Endothelial cell of umbilical vein (primary cell): ENCODE measurements at regions of chr4 and their contacts with region 1.

Region 1: DNA sequence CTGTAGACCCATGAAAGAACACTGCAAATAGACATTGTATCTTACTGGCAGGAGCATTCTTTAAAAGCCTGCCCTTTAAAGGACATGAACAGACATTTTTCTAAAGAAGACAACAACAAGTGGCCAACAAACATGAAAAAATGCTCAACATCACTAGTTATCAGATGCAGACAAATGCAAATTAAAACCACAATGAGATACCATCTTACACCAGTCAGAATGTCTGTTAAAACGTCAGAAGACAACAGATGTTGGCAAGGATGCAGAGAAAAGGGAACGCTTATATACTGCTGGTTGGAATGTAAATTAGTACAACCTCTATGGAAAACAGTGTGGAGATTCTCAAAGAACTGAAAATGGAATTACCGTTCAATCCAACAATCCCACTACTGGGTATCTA is 77.2 kb downstream of the ATP10D start:
- DNase-seq: no peak
- H3K4me3 ChIP-seq: no peak overlapping the region
- H3K27ac ChIP-seq: no peak overlapping the region
- H3K4me1 ChIP-seq: peaks cover 2% of the 10 kb centered on the region
- H3K27me3 ChIP-seq: no peaks in the 10 kb centered on the region
- CTCF ChIP-seq: no peak
- POLR2A ChIP-seq: no peak

Region 2: GRCh38 chr4:47355568-47355967 is 206.7 kb before region 1 on chr4:
- CTCF ChIA-PET with region 1: no interaction called
- POLR2A ChIA-PET with region 1: no interaction called
- dilution Hi-C with region 1: no loop called
- intact Hi-C with region 1: no loop called
- DNase-seq: no peak
- H3K4me3 ChIP-seq: no peak overlapping the region
- H3K27ac ChIP-seq: no peak overlapping the region
- H3K4me1 ChIP-seq: no peaks in the 10 kb centered on the region
- H3K27me3 ChIP-seq: no peaks in the 10 kb centered on the region
- CTCF ChIP-seq: no peak
- POLR2A ChIP-seq: no peak

Region 3: GRCh38 chr4:47485047-47485692 is 77.1 kb before region 1 on chr4 and contains the start of gene ATP10D:
- CTCF ChIA-PET with region 1: interaction called, 16 read pairs
- POLR2A ChIA-PET with region 1: no interaction called
- dilution Hi-C with region 1: no loop called
- intact Hi-C with region 1: loop called (anchors 1 kb)
- DNase-seq: peak; percentile 95
- H3K4me3 ChIP-seq: peak within 1 kb of the TSS; percentile 75 to 83 (median 79)
- H3K27ac ChIP-seq: peak within 1 kb of the TSS; percentile 77
- H3K4me1 ChIP-seq: peaks cover 2% of the 10 kb centered on the region
- H3K27me3 ChIP-seq: no peaks in the 10 kb centered on the region
- CTCF ChIP-seq: no peak
- POLR2A ChIP-seq: peak; percentile 94
- total RNA-seq, gene ATP10D: 30.9 and 34.1 TPM in 2 replicates

Region 4: DNA sequence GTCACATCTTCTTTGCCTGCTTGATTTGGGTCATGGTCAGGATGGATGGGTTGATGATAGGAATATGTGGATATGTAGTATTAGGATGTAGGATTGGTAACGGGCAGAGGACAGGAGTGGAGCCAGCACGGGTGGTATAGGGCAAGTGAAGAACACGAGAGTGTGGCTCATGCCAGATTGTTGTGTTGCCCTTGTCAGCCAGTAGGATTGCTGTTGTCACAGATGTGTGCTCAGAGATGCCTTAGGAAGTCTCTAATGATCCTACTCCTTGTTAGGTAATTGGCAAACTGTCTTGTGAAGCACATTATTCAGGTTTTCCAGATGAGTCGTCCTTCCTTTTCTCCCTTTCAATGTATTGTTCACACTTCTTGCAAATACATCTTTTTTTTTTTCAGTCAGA is 71.7 kb before region 1 on chr4:
- CTCF ChIA-PET with region 1: interaction called, 16 read pairs
- POLR2A ChIA-PET with region 1: no interaction called
- dilution Hi-C with region 1: no loop called
- intact Hi-C with region 1: loop called (anchors 1 kb)
- DNase-seq: peak; percentile 80
- H3K4me3 ChIP-seq: no peak overlapping the region
- H3K27ac ChIP-seq: no peak overlapping the region
- H3K4me1 ChIP-seq: peaks cover 8% of the 10 kb centered on the region
- H3K27me3 ChIP-seq: no peaks in the 10 kb centered on the region
- CTCF ChIP-seq: peak; percentile 57 to 64
- POLR2A ChIP-seq: no peak

Region 5: DNA sequence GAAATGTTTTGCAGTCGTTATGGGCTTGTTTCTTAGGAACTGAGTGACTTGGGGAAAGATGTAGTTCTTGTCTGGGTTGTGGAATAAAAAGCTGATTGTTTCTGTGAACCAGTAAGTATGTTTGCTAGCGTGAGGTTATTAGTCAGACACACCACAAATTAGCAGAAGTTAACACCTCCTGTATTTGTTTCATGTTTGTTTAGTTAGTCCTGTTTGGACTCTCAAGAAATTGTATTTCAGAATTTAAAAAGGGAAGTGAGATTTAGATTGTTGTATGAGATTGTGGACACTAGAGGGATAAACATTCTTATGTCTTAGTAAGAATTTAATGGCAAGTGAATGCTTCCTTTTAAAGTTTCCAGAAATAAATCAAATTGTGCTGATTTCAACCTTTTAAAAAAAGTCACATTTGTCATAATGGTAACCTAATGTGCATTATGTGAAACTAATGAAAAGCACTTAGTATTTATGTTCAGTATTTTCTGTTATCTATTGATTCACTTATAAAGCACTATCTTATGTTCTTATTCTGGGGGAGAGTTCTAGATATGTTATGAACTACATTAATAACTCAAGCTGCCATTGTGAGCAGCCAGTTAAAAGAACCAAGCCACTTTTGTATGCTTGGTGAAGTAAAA is 51.7 kb before region 1 on chr4:
- CTCF ChIA-PET with region 1: interaction called, 22 read pairs
- POLR2A ChIA-PET with region 1: no interaction called
- dilution Hi-C with region 1: no loop called
- intact Hi-C with region 1: loop called (anchors 1 kb)
- DNase-seq: peak; percentile 68
- H3K4me3 ChIP-seq: no peak overlapping the region
- H3K27ac ChIP-seq: peak overlapping the region; percentile 45
- H3K4me1 ChIP-seq: peaks cover 11% of the 10 kb centered on the region
- H3K27me3 ChIP-seq: no peaks in the 10 kb centered on the region
- CTCF ChIP-seq: no peak
- POLR2A ChIP-seq: no peak

Region 6: DNA sequence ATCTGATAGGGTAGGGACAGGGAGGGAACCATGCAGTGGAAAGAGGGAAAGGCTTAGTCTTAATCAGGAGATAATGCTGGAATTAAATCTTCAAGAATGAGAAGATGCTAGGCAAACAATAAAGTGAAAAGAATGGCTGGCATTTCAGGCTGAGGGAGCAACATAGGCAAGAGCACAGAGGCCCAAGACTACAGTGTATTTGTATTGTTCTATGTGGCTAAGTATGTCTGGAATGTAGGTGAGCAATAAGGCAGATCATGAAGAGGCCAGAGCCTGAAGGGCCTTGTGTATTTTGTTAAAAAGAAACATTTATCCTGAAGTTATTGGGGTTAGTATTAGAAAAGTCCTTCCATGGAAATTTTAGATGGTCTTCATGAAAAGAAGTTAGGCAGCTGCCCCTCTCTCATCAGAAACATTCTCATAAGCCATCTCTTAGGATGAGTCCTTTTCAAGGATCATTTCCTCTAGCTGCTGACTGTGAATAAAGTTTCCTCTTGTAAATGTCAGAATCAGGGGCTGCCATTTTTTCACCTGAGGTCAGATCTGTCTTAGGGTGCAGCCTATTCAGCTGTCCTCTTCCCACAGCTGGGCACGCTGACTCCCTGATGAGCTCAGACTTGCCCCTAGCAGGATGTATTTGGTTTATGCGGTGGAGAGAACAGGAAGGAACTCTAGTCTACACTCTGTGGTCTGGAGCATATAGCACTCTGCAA is 30.9 kb before region 1 on chr4:
- CTCF ChIA-PET with region 1: interaction called, 4 read pairs
- POLR2A ChIA-PET with region 1: no interaction called
- dilution Hi-C with region 1: no loop called
- intact Hi-C with region 1: loop called (anchors 1 kb)
- DNase-seq: peak; percentile 81
- H3K4me3 ChIP-seq: no peak overlapping the region
- H3K27ac ChIP-seq: peak overlapping the region; percentile 81
- H3K4me1 ChIP-seq: peaks cover 43% of the 10 kb centered on the region
- H3K27me3 ChIP-seq: no peaks in the 10 kb centered on the region
- CTCF ChIP-seq: no peak
- POLR2A ChIP-seq: peak; percentile 41

Region 7: DNA sequence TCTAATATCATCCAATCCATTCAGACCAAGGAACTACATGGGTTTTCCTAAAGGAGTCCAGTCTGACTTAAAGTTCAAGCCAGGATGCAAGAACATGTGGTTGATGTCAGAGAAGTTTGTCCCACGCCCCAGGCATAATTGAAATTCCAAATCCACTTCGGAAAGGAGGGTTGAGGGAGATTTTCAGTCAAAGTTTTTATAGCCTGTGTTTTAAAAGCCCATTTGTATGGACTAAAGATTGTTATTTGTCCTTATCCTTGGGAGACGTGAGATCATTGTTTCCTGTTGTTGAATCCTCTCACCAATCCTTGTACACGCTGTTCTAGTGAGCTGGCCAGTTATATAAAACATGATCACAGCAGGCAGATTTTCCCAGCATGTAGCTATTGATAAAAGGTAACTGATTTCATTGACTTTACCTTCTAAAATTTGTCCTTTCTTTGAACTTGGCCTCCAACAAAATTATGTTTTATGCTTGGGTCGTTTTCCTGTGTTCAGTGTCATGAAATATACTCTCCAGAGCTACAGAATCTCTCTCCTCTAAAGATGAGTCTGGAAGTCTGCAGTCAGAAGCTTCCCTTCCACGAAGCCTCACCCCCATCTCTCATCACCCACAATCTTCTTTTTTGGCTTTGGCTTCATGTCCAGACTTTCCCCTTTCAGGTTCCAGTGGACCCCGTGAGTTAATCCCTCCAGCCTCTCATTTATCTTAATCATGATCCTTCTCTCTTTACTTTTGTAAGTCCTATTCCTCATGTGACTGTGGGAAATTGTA is 15.7 kb after region 1 on chr4:
- CTCF ChIA-PET with region 1: interaction called, 5 read pairs
- POLR2A ChIA-PET with region 1: no interaction called
- dilution Hi-C with region 1: no loop called
- intact Hi-C with region 1: loop called (anchors 1 kb)
- DNase-seq: peak; percentile 92
- H3K4me3 ChIP-seq: peak overlapping the region in 1 of 3 experiments; percentile 26
- H3K27ac ChIP-seq: peak overlapping the region; percentile 99
- H3K4me1 ChIP-seq: peaks cover 16% of the 10 kb centered on the region
- H3K27me3 ChIP-seq: no peaks in the 10 kb centered on the region
- CTCF ChIP-seq: no peak
- POLR2A ChIP-seq: peak; percentile 40